Activated CD4-positive, alpha-beta T cell treated with anti-CD3 and anti-CD28 coated beads, Interleukin-2, amount 10 ng/mL, durations not matched to agents 24 days and 14 days (primary cell): ENCODE measurements at regions of chr2 and their contacts with region 1.

Region 1: DNA sequence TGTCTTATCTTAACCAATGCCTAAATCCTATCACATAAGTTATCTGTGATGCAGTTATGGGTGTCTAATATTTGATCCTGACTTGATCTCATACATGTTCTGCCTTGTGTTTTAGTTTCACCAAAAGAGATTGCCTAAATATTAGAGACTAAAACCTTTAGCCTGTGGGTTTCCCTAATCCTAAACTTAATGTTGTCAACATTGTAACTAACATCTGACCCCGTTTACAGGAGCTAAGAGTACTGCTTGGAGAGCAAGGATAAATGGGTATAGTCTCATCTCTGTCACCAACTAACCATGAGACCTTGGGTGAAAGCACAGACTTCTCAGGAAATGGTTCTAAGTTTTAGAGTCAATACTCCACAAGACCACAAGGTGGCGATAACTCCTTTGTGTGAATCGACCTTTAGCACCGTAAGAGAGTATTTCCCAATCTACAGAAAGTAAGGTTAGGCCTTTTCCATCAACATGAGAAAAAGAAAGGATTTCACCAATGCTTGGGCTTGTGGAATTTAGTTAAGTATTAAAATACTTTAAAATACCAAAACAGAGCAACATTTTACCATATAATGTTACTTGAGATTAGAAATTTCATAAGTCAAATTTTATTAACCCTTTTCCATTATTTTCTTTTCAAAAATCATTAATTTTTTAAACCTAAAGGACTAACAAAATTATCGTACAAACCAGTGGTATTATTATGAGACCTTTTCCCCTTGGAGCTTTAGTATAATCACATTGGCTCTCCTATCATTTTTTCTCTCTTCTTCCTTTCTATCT is 60.5 kb downstream of the G6PC2 start:
- DNase-seq: peak; percentile 85
- H3K4me3 Mint-ChIP-seq: no peak overlapping the region
- H3K27ac Mint-ChIP-seq: no peak overlapping the region
- H3K4me1 Mint-ChIP-seq: peaks cover 21% of the 10 kb centered on the region
- H3K27me3 Mint-ChIP-seq: peaks cover 4% of the 10 kb centered on the region

Region 2: GRCh38 chr2:169072163-169072925 is 110.7 kb after region 1 on chr2:
- intact Hi-C with region 1: loop called (anchors 5 kb)
- DNase-seq: no peak
- H3K4me3 Mint-ChIP-seq: peak overlapping the region; percentile 25
- H3K27ac Mint-ChIP-seq: peak overlapping the region; percentile 31
- H3K4me1 Mint-ChIP-seq: peaks cover 31% of the 10 kb centered on the region
- H3K27me3 Mint-ChIP-seq: no peaks in the 10 kb centered on the region

Region 3: DNA sequence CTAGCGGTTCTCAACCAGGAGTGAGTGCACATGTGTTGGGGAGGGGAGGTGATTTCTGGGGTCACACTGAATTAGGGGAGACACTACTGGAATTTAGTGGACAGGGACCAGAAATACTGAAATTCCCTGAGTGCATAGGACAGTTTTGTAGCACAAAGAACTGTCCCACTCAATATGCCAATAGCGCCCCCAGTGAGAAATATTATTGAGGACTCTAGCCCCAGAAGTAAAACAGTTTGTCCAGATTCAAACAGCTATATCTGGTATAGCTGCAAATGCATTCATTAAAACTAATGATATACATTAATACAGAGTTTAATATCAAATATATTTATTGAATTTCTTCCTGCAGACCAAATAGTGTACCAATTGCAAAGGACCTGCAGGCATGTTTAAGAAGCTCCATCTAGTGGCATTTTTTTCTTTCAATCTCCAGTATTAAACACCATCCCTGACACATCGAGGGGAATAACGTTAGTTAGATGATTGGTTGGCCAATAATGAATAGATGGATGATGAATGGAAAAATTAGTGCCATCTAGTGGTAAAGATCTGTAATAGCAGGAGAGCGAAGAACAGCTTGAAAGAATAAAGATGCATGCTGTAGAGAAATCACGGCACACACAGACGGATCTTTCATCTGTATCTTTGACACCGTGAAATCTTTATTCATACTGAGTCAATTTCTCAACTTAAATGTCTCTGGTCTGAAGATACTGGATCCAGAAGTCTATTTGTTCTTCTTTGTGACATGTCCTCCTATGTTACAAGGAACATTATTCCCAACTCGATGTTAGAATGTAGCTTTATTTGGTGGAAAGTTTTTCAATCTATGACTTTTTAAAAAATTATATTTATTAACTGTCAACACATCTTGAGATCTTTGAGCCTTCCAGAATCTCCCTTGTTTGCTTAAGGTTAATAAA is 170.2 kb after region 1 on chr2:
- intact Hi-C with region 1: loop called (anchors 1 kb)
- DNase-seq: peak; percentile 66
- H3K4me3 Mint-ChIP-seq: no peak overlapping the region
- H3K27ac Mint-ChIP-seq: no peak overlapping the region
- H3K4me1 Mint-ChIP-seq: no peaks in the 10 kb centered on the region
- H3K27me3 Mint-ChIP-seq: peaks cover 4% of the 10 kb centered on the region

Region 4: GRCh38 chr2:169141713-169142352 is 180.2 kb after region 1 on chr2:
- intact Hi-C with region 1: loop called (anchors 1 kb)
- DNase-seq: peak; percentile 88
- H3K4me3 Mint-ChIP-seq: no peak overlapping the region
- H3K27ac Mint-ChIP-seq: no peak overlapping the region
- H3K4me1 Mint-ChIP-seq: no peaks in the 10 kb centered on the region
- H3K27me3 Mint-ChIP-seq: peaks cover 2% of the 10 kb centered on the region

Region 5: GRCh38 chr2:169221745-169222369 is 260.2 kb after region 1 on chr2:
- intact Hi-C with region 1: loop called (anchors 5 kb)
- DNase-seq: no peak
- H3K4me3 Mint-ChIP-seq: no peak overlapping the region
- H3K27ac Mint-ChIP-seq: no peak overlapping the region
- H3K4me1 Mint-ChIP-seq: no peaks in the 10 kb centered on the region
- H3K27me3 Mint-ChIP-seq: peaks cover 5% of the 10 kb centered on the region